Transverse colon (tissue), 4 donors: ENCODE measurements at regions of chr7 and their contacts with region 1.

Region 1: DNA sequence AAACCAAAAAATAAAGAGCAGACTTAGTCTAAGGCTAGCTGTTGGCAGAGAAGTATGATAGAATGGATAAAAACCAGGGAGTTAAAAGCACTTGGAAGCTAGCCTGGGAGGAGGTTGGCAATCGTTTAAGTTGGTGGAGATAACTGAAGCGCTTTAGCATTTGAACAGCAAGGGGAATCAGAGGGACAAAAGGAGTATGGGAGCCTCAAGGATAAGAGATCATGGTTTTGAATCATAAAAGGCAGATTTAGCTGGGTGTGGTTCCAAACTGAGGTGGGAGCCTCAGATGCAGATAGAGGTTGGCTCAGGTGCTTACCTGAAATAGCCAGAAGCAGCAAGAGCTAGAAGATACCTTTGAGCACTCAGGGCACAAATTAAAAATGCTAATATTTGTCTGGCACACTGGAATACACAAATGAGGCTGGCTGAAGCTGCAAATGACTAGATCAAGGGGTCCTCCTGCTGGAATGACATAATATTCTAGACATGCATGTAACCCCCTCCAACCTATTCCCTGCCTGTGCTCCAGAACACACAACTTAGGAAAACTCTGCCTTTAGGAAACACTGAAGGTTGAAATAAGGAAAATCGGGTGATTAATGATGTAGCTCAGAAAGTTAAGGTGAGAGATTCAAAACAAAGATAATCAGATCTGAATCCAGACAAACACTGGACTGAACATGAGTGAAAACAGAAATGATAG is 372.3 kb upstream of the LRRN3 start:
- DNase-seq: no peak
- H3K4me3 ChIP-seq: no peak overlapping the region
- H3K27ac ChIP-seq: no peak overlapping the region
- H3K4me1 ChIP-seq: no peaks in the 10 kb centered on the region
- H3K27me3 ChIP-seq: no peaks in the 10 kb centered on the region
- CTCF ChIP-seq: no peak
- EP300 ChIP-seq: no peak
- POLR2A ChIP-seq: no peak

Region 2: GRCh38 chr7:111540199-111540815 is 821.7 kb after region 1 on chr7:
- in situ Hi-C with region 1: no loop called
- intact Hi-C with region 1: loop called (anchors 5 kb)
- DNase-seq: no peak
- H3K4me3 ChIP-seq: no peak overlapping the region
- H3K27ac ChIP-seq: no peak overlapping the region
- H3K4me1 ChIP-seq: no peaks in the 10 kb centered on the region
- H3K27me3 ChIP-seq: no peaks in the 10 kb centered on the region
- CTCF ChIP-seq: no peak
- EP300 ChIP-seq: no peak
- POLR2A ChIP-seq: no peak